Natural killer cell (primary cell): ENCODE measurements at regions of chr1 and their contacts with region 1.

Region 1: GRCh38 chr1:7808253-7808844 is 24.3 kb downstream of the PER3 start:
- DNase-seq: peak in 1 of 2 donors; percentile 54
- ATAC-seq: peak; percentile 37 to 89 (median 86)
- H3K4me3 ChIP-seq: no peak overlapping the region
- H3K4me3 Mint-ChIP-seq: no peak overlapping the region
- H3K27ac ChIP-seq: no peak overlapping the region
- H3K27ac Mint-ChIP-seq: peak overlapping the region in 1 of 2 donors; percentile 18
- H3K4me1 ChIP-seq: no peaks in the 10 kb centered on the region
- H3K4me1 Mint-ChIP-seq: peaks cover 0 to 5% of the 10 kb centered on the region in 2 donors
- H3K27me3 ChIP-seq: no peaks in the 10 kb centered on the region
- H3K27me3 Mint-ChIP-seq: no peaks in the 10 kb centered on the region
- CTCF ChIP-seq: peak; percentile 62

Region 2: DNA sequence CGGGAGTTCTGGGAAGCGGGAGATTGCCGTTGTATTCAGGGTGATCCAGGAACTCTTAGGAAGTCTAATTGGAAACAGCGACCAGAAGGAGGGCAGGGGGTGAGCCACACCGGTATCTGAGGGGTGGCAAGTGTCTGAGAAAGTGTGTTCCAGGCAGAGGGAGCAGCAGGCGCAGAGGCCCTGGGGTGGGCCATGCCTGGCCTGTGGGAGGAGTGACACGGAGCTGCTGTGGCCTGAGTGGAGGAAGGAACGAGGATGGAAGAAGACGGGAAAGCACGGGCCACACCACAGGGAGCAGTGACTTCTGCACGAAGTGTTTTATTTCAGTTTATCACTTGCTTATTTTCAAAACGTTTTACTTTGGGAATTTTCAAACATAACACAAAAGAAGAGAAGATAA is 12.9 kb before region 1 on chr1:
- intact Hi-C with region 1: no loop called
- DNase-seq: no peak
- ATAC-seq: no peak
- H3K4me3 ChIP-seq: no peak overlapping the region
- H3K4me3 Mint-ChIP-seq: no peak overlapping the region
- H3K27ac ChIP-seq: no peak overlapping the region
- H3K27ac Mint-ChIP-seq: no peak overlapping the region
- H3K4me1 ChIP-seq: no peaks in the 10 kb centered on the region
- H3K4me1 Mint-ChIP-seq: no peaks in the 10 kb centered on the region
- H3K27me3 ChIP-seq: no peaks in the 10 kb centered on the region
- H3K27me3 Mint-ChIP-seq: no peaks in the 10 kb centered on the region
- CTCF ChIP-seq: no peak

Region 3: DNA sequence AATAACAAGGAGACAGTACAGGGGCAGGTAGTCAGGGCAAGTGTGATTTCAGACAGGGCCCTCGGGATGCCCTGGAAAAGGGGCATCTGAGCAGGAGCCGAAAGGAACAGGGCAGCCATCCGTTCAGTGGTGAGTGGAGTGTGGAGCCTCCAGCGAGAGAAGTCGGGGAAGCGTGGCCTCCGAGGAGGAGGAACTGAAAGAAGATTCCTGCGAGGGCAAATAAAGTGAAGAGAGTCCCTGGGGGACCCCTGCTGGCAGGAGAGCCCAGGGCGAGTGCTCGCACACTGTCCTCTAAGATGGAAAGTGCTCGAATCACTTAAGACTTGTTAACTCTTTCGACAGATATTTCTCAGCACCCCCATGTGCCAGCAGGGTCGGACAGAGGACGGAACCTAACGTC is 48.0 kb after region 1 on chr1:
- intact Hi-C with region 1: loop called (anchors 2 kb)
- DNase-seq: peak in 1 of 2 donors; percentile 6
- ATAC-seq: peak; percentile 30 to 81 (median 69)
- H3K4me3 ChIP-seq: no peak overlapping the region
- H3K4me3 Mint-ChIP-seq: peak overlapping the region; percentile 48
- H3K27ac ChIP-seq: no peak overlapping the region
- H3K27ac Mint-ChIP-seq: peak overlapping the region; percentile 4 to 63
- H3K4me1 ChIP-seq: peaks cover 4% of the 10 kb centered on the region
- H3K4me1 Mint-ChIP-seq: peaks cover 5 to 15% of the 10 kb centered on the region in 2 donors
- H3K27me3 ChIP-seq: no peaks in the 10 kb centered on the region
- H3K27me3 Mint-ChIP-seq: peaks cover 0 to 2% of the 10 kb centered on the region in 2 donors
- CTCF ChIP-seq: no peak

Region 4: DNA sequence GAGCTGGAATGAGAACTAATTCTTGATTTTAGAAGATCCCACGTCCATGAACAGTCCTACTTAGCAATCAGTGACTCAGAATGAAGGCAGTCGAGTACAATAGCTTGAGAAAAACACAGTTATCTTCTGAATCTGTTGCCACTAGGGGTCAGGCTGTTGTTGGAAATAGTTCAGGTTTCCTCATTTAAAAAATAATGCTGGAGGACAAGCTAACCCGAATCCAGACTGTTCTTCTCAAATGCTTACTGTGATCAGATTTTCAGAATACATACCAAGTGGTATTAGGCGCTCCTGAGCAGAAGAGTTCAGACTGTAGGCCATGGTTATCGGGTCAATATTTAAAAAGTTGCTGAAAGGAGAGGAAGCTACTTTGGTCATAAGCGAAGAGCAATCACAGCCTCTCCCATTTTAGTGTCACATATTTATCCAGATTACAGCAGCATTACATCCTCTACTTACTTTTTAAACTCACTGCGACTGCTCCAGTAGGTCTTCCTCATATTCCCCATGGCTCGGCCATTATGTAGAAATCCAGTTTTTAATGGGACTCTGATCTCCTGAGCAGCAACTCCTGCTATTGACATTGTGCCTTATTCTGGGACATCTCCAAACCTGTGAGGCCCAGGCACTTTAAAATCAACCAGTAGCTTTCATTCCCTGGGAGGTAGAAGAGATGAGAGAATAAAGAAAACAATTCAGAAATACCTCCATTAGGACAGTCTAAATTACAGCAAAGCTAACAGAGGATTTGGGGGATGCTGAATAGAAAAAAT is 206.9 kb after region 1 on chr1:
- intact Hi-C with region 1: loop called (anchors 5 kb)
- DNase-seq: peak in 1 of 2 donors; percentile 78
- ATAC-seq: peak; percentile 52 to 82 (median 64)
- H3K4me3 ChIP-seq: no peak overlapping the region
- H3K4me3 Mint-ChIP-seq: no peak overlapping the region
- H3K27ac ChIP-seq: no peak overlapping the region
- H3K27ac Mint-ChIP-seq: no peak overlapping the region
- H3K4me1 ChIP-seq: no peaks in the 10 kb centered on the region
- H3K4me1 Mint-ChIP-seq: peaks cover 0 to 5% of the 10 kb centered on the region in 2 donors
- H3K27me3 ChIP-seq: no peaks in the 10 kb centered on the region
- H3K27me3 Mint-ChIP-seq: peaks cover 23 to 33% of the 10 kb centered on the region in 2 donors
- CTCF ChIP-seq: peak; percentile 65